ENCODE measurements at regions of chr17 and their contacts with region 1.

Region 1: DNA sequence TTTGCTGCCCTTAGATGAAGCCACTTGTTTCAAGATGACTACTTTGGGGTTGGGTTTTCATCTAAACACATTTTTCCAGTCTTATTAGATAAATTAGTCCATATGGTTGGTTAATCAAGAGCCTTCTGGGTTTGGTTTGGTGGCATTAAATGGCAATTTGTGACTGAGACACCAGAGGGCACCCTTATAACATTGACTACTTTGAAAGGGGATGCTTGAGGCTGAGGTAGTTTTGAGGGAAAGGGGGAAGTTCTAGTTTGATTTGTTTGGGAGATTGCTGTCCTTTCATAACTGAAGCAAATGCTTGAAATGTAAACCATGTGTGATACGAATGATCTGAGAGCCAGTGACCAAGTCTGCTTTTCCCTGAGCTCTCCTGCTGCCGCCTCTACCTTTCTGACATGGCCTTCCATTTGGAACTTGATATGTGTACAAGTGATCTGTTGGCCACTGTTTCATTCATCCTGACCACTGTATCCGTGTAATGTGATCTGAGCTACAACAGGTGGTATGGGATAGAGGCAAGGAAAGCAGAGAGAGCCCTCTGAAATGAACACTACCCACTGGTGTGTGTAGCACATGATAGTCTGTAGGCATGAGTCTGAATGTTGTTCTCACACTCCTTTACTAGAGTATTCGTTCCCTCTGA is 5.8 kb upstream of the RARA start:
- DNase-seq: peak in 2 of 5 donors; percentile 32 to 68
- H3K4me3 ChIP-seq: no peak overlapping the region
- H3K27ac ChIP-seq: no peak overlapping the region
- H3K4me1 ChIP-seq: peaks cover 21% of the 10 kb centered on the region
- H3K27me3 ChIP-seq: no peaks in the 10 kb centered on the region
- CTCF ChIP-seq: peak; percentile 61 to 82 (median 78)
- EP300 ChIP-seq: no peak
- POLR2A ChIP-seq: no peak

Region 2: GRCh38 chr17:40058186-40058784 is 244.8 kb before region 1 on chr17:
- intact Hi-C with region 1: no loop called
- DNase-seq: peak in 1 of 5 donors; percentile 59
- H3K4me3 ChIP-seq: no peak overlapping the region
- H3K27ac ChIP-seq: peak overlapping the region; percentile 44 to 73
- H3K4me1 ChIP-seq: peaks cover 6% of the 10 kb centered on the region
- H3K27me3 ChIP-seq: no peaks in the 10 kb centered on the region
- CTCF ChIP-seq: no peak
- EP300 ChIP-seq: no peak
- POLR2A ChIP-seq: no peak

Region 3: GRCh38 chr17:40355123-40355803 is 52.1 kb after region 1 on chr17:
- intact Hi-C with region 1: loop called (anchors 2 kb)
- DNase-seq: peak; percentile 74 to 90 (median 85)
- H3K4me3 ChIP-seq: no peak overlapping the region
- H3K27ac ChIP-seq: peak overlapping the region in 1 of 2 donors; percentile 18
- H3K4me1 ChIP-seq: peaks cover 3% of the 10 kb centered on the region
- H3K27me3 ChIP-seq: no peaks in the 10 kb centered on the region
- CTCF ChIP-seq: peak; percentile 91 to 98 (median 97)
- EP300 ChIP-seq: no peak
- POLR2A ChIP-seq: peak; percentile 36

Region 4: DNA sequence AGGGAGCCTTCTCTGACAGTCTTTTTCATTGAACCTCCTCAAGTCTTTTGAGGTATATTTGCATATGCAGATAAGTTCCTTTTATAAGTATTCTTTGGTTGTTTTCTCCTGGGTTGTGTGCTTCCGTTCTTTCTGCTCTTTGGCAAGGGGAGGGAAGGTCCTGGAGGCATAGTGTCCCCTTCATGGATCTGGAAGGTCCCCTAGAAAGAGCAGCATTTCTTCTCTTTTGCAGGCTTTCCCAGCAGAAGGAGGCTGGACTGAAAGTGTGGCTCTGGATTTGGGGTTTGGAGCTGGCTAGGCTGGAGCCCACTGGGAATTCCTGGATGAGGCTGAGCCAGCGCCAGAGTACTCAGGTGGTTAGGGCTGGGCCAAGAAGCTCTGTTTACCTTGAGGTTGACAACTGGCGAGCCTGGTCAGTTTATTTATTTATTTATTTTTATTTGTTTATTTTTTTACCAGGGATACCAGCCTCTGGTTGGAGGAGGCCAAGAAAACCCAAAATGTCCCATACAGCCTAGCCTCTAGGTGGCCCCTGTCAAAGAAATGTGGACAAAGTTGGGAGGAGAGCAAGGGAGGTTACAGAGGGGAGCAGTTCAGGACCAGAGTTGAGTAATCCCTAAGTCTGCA is 120.0 kb after region 1 on chr17:
- intact Hi-C with region 1: loop called in 1 of 4 experiments (anchors 10 kb)
- DNase-seq: no peak
- H3K4me3 ChIP-seq: no peak overlapping the region
- H3K27ac ChIP-seq: no peak overlapping the region
- H3K4me1 ChIP-seq: no peaks in the 10 kb centered on the region
- H3K27me3 ChIP-seq: no peaks in the 10 kb centered on the region
- CTCF ChIP-seq: no peak
- EP300 ChIP-seq: no peak
- POLR2A ChIP-seq: no peak